Right ventricle myocardium inferior (tissue), 1 donor: ENCODE measurements at regions of chr6 and their contacts with region 1.

Region 1: DNA sequence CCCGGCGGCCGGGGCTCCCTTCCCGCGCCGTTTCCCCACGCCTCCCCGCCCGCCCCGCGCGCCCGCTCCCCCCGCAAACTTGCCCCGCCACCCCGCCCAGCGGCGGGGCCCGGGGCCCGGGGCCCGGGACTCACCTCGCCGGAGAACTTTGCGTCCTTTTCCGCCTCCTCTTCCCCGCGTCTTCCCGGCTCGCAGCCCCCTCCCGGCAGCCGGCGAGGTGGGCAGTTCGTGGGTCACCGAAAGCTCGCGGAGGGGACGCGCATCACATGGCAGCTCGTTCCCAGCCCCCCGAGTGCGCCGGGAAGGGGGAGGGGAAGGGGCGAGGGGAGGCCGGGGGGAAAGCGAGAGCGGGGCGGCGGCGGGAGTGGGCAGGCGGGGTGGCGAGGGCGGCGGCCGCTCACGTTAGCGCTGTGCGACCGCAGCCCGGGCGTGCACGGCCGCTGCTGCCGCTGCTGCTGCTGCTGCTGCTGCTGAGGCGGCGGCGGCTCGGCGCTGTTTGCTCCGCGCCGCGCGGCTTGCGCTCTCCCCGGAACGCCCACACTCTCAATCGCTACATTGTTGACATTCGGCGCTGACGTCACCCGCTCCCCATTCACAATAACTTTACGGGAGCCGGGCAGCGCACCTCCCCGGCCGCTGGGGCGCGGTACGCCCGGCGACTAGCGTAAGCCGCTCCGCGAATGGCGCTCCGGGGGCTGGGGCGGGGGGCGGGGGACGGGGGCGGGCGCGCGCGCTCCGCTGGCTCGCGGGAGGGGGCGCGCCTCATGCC is at the start of gene BACH2:
- DNase-seq: peak; percentile 94
- ATAC-seq: peak; percentile 77
- total RNA-seq, gene BACH2: 2.2 TPM

Region 2: GRCh38 chr6:90098001-90098531 is 198.5 kb before region 1 on chr6:
- intact Hi-C with region 1: loop called (anchors 5 kb)
- DNase-seq: no peak
- ATAC-seq: peak; percentile 92